ENCODE measurements at regions of chr6 and their contacts with region 1.

Region 1: DNA sequence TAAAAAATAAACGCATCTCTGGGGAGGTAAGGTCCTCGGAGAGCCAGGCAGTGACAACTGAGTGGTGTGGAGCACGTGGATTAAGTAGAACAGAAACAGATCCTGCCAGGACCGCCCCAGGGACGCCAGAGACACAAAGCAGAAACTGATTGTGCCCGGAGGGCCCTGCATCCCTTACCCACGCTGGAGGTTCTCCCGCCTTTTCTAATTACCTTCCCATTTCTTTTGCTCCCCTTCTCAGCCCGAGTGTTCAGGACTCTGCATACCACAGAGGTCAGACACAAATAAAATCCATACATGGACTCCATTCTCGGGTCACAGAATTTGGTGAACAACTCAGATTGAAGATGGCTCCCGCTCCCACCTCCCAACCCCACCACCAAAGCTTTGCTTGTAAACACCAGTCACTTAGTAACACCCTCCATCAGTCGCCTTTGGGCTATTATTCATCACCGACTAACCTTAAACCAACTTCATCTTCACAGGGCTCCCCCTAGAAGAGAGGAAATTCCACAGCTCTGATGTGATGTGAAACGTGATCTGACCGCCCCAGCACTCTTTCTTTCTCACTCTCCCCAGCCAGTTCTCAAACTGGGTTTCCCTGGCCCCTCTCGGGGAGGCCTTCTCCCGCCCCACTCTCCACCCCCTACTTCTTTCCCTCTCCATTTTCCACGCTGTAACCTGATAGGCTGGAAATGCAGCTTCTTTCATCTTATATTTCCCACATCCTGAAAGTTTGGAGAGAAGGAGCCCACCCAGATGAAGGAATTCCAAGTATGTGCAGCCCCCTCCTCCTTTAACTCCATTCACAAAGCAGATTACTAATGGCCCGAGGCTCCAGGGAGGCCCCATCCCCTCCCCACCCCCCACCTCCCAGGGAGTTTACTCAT is 32.5 kb upstream of the PIM1 start:
- DNase-seq: peak; percentile 93
- ATAC-seq: peak; percentile 81
- H3K4me3 ChIP-seq: peak overlapping the region; percentile 58 to 71 (median 62)
- H3K27ac ChIP-seq: peak overlapping the region; percentile 92
- H3K4me1 ChIP-seq: peaks cover 82% of the 10 kb centered on the region
- H3K27me3 ChIP-seq: no peaks in the 10 kb centered on the region
- CTCF ChIP-seq: peak; percentile 16; the same call in 1 of the 2 replicates
- EP300 ChIP-seq: peak in 1 of 2 experiments; percentile 27; a peak in 1 of 4 replicates
- POLR2A ChIP-seq: peak; percentile 44 to 49
- RAD21 ChIP-seq: no peak

Region 2: DNA sequence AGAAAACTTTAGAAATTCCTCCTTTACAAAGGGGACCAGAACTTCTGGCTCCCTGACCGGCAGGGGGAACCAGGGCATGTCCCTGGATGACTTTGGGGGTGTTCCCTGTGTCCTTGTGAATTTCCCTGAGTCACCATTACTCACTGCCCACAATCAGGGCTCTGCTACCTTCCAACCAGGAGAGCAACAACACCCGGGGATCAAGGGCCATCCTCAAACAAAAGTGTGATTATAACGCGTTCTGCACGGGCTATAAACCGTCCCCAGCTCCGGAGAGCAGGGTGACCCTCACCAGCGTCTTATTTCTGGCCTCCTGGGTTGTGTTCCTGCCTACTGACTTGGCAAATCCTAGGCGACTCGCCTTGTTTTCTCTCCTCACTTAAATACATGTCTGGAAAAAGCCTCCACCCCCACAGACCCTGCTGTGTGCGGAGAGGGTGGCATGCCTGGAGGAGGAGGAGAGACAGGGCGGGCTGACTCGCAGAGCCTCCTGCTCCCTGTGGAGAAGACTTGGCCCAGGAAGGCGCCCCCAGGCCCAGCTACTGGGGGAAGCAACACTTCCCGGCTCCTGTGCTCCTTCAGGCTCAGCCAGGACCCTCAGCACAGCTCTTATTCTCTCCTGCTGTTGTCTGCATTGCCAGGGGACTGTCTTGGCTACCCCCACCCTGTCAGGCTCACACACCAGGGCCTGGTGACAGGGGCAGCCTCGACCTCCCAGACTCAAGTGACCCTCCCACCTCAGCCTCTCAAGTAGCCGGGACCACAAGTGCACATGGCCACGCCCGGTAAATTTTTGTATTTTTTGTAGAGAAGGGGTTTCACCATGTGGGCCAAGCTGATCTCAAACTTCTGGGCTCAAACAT is 77.9 kb before region 1 on chr6:
- CTCF ChIA-PET with region 1: no interaction called
- POLR2A ChIA-PET with region 1: interaction called, 12 read pairs
- in situ Hi-C with region 1: no loop called
- intact Hi-C with region 1: loop called (anchors 1 kb)
- DNase-seq: peak; percentile 99
- ATAC-seq: peak; percentile 91
- H3K4me3 ChIP-seq: peak overlapping the region; percentile 32 to 67 (median 44); a peak in 5 of 6 replicates
- H3K27ac ChIP-seq: peak overlapping the region; percentile 97
- H3K4me1 ChIP-seq: peaks cover 76% of the 10 kb centered on the region
- H3K27me3 ChIP-seq: no peaks in the 10 kb centered on the region
- CTCF ChIP-seq: peak; percentile 92
- EP300 ChIP-seq: peak; percentile 89 to 96; a peak in 3 of 4 replicates
- POLR2A ChIP-seq: peak in 1 of 2 experiments; percentile 85; a peak in 2 of 4 replicates
- RAD21 ChIP-seq: peak; percentile 96

Region 3: DNA sequence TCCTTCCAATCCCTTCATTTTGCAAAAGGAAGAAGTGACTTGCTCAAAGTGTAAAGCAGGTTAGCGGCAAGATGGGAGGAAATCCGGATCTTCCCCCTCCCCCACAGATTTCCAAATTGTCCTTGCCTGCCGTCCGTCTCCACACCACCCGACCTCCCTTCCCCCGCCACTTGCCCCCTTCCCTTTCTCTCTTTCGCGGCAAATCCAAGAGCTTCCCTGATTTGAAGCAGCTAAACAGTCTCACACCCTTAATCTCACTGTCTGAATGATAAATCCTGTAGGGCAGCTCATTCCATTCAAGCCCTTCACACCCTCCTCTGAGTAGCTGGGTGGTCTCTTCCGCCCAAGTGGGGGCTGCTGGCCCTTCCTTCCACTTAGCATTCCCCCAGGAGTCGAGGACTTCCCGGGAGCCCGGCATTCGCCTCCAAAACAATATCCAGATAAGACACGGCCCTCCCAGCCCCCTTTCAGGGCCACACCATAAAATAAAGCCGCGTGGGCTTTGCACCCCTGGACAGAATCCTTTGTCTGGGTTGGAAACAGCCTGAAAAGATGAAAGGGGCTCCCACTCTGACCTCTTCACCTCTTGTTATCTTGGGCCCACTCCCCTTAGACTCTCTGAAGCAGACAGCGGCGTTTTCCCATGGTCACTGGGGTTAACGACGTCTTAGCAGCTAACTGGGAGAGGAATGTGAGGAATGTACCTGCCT is 11.5 kb before region 1 on chr6:
- CTCF ChIA-PET with region 1: no interaction called
- POLR2A ChIA-PET with region 1: interaction called, 88 read pairs
- in situ Hi-C with region 1: no loop called
- intact Hi-C with region 1: no loop called
- DNase-seq: peak; percentile 75
- ATAC-seq: no peak
- H3K4me3 ChIP-seq: peak overlapping the region in 2 of 3 experiments; percentile 13 to 35; a peak in 4 of 6 replicates
- H3K27ac ChIP-seq: peak overlapping the region; percentile 95
- H3K4me1 ChIP-seq: peaks cover 95% of the 10 kb centered on the region
- H3K27me3 ChIP-seq: no peaks in the 10 kb centered on the region
- CTCF ChIP-seq: no peak
- EP300 ChIP-seq: peak in 1 of 2 experiments; percentile 92; a peak in 2 of 4 replicates
- POLR2A ChIP-seq: no peak
- RAD21 ChIP-seq: no peak

Region 4: DNA sequence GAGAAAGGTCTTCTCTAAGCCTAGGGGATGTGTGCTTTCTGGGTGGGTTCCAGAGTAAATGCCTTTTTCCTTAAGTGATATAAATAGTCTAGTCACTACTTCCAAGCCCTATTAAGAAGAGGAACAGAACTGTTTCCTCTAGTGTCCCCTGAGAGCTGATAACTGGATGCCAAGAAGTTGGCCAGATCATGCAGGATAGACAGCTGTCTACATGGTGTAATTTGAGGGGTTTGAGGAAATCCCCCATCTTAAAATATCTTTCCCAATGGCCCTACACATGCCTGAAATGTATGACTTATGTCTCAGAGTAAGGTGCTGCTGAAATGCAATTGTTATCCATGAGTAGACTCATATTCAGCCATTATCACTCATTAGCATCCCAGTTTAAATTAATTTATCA is 12.3 kb after region 1 on chr6:
- CTCF ChIA-PET with region 1: no interaction called
- POLR2A ChIA-PET with region 1: interaction called, 55 read pairs
- in situ Hi-C with region 1: no loop called
- intact Hi-C with region 1: no loop called
- DNase-seq: no peak
- ATAC-seq: no peak
- H3K4me3 ChIP-seq: no peak overlapping the region
- H3K27ac ChIP-seq: no peak overlapping the region
- H3K4me1 ChIP-seq: peaks cover 84% of the 10 kb centered on the region
- H3K27me3 ChIP-seq: no peaks in the 10 kb centered on the region
- CTCF ChIP-seq: no peak
- EP300 ChIP-seq: no peak
- POLR2A ChIP-seq: no peak
- RAD21 ChIP-seq: no peak

Region 5: DNA sequence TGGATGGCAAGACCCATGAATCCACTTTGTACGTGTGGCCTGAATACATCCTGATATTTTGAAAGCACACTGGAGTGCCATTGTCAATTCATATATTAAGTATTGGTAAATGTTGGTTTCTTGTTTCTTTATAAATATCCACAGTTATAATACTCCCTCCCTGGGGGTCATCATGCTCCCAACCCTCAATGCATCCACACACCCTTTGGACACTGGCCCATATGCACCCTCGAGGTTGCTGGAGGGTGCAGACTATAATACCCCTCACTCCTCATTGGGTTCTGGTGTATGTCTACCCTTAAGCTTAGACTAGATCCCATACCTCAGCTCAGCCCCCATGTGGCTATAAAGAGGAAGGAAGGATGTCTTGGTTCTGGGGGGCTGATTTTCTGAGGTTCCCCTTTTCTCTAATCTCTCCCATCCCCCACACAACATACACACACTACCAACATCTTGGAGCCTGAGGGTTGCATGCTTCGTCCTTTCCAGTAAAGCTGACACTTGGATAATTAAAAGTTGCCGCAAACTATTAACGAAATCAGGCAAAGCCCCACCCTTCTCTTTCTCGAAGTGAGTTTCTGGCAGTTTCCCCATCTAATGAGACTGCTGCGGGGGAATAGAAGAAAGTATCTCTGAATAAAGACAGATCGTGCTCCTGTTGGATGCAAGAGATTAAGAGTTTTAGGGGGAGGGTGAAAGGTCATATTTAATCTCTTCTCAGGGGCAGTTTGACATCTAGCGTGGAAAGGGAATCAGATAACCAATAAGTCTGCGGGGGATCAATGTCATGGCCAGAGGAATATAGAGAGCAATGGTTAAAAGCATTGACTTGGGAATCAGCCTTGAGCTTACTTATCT is 39.9 kb after region 1 on chr6:
- CTCF ChIA-PET with region 1: interaction called, 3 read pairs
- POLR2A ChIA-PET with region 1: interaction called, 107 read pairs
- in situ Hi-C with region 1: loop called (anchors 5 kb)
- intact Hi-C with region 1: no loop called
- DNase-seq: no peak
- ATAC-seq: peak; percentile 73
- H3K4me3 ChIP-seq: no peak overlapping the region
- H3K27ac ChIP-seq: no peak overlapping the region
- H3K4me1 ChIP-seq: peaks cover 24% of the 10 kb centered on the region
- H3K27me3 ChIP-seq: no peaks in the 10 kb centered on the region; a peak in 1 of 5 replicates
- CTCF ChIP-seq: peak; percentile 41
- EP300 ChIP-seq: no peak
- POLR2A ChIP-seq: no peak
- RAD21 ChIP-seq: no peak

Region 6: DNA sequence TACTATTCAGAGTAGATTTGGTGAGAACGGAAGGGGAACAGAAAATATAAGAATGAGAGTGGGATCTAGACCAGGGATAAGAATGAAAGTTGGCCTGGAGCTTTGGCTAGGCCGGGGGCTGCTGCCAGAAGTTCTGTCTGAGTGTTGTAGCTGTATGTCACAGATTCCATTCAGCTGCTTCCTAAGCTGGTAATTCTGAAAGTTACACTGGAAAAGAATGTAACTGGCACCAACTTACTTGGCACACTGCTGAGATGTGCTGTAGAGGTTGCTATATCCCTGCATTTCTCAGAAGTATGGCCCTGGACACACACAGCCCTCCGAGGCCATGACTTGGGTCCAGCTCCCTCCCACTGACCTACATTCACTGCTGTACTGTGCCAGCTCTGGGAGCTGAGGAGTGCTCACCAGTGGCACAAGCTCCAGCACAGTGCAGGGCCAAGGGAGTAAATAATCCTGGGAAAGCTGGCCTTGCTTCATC is 146.3 kb after region 1 on chr6:
- CTCF ChIA-PET with region 1: no interaction called
- POLR2A ChIA-PET with region 1: no interaction called
- in situ Hi-C with region 1: no loop called
- intact Hi-C with region 1: no loop called
- DNase-seq: no peak
- ATAC-seq: no peak
- H3K4me3 ChIP-seq: no peak overlapping the region
- H3K27ac ChIP-seq: no peak overlapping the region
- H3K4me1 ChIP-seq: no peaks in the 10 kb centered on the region
- H3K27me3 ChIP-seq: no peaks in the 10 kb centered on the region
- CTCF ChIP-seq: no peak
- EP300 ChIP-seq: no peak
- POLR2A ChIP-seq: no peak
- RAD21 ChIP-seq: no peak